Activated CD8-positive, alpha-beta T cell treated with anti-CD3 and anti-CD28 coated beads for 36 hours (primary cell): ENCODE measurements at regions of chr17 and their contacts with region 1.

Region 1: GRCh38 chr17:31524926-31525800 is 133.7 kb downstream of the RAB11FIP4 start:
- DNase-seq: peak; percentile 92
- ATAC-seq: peak; percentile 77
- H3K4me3 Mint-ChIP-seq: no peak overlapping the region
- H3K27ac Mint-ChIP-seq: no peak overlapping the region
- H3K4me1 Mint-ChIP-seq: no peaks in the 10 kb centered on the region
- H3K27me3 Mint-ChIP-seq: no peaks in the 10 kb centered on the region
- CTCF ChIP-seq: peak; percentile 93

Region 2: DNA sequence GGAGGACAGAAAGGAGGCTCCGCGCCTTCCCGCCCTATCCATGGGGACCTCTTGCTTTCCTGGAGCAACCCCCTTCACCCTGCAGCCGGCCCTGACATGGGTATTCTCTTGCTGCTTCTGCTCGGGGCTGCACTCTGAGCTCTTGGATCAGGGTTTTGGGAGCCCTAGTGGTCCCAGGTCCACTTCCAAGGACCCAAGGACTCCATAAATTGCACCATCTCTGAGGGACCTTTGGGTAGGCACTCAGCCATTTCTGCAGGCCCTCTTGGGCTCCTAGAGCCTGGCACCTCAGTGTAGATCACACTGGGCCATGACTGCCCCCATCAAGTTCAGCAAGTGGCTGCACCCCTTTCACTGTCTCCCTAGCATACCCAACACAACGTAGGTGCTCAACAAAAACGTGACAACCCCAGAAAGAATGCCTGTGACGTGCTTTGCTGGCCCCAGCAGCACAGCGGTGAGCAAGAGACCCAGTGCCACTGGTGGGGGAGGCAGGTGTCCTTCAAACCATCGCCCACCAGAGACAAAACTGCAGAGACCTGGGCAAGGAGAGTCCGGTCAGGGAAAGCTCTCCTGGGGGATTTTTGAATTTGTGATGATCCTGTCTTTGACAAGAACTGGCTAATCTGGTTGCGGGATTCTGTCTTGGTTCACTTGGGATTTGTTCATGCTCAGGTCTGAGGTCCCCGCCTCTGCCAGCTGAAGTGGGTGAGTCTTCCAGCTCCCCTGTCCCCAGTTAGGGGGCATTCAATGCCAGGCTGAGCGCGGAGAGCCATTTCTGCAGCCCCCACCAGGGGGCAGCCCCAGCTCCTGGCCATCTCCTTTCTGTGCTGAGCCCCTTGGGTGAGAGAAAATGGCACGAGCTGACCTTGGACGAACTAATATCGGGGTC is 136.1 kb before region 1 on chr17:
- CTCF ChIA-PET with region 1: interaction called, 41 read pairs
- POLR2A ChIA-PET with region 1: no interaction called
- intact Hi-C with region 1: loop called (anchors 5 kb)
- DNase-seq: peak; percentile 59
- ATAC-seq: peak; percentile 69
- H3K4me3 Mint-ChIP-seq: no peak overlapping the region
- H3K27ac Mint-ChIP-seq: no peak overlapping the region
- H3K4me1 Mint-ChIP-seq: peaks cover 5% of the 10 kb centered on the region
- H3K27me3 Mint-ChIP-seq: peaks cover 38% of the 10 kb centered on the region
- CTCF ChIP-seq: peak; percentile 87

Region 3: DNA sequence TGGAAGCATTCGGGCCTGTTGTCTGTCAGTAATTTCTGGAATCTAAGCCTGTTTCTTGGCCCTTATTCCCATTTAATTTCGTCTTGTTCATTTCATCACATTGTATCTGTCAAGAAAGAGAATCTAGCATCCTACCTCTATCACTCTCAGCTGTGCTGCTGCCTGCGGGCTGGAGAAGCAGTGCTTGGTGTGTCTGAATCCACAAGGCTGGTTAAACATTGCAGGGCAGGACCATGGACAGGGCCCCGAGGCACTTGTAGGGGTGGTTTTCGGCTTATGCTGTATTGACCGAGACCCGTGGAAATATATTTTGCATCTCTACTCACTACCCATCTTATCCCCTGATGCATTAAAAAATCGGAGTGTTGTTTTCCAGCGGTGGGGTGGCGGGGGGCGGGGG is 130.6 kb before region 1 on chr17:
- CTCF ChIA-PET with region 1: interaction called, 41 read pairs
- POLR2A ChIA-PET with region 1: no interaction called
- intact Hi-C with region 1: loop called (anchors 5 kb)
- DNase-seq: peak; percentile 74
- ATAC-seq: peak; percentile 60
- H3K4me3 Mint-ChIP-seq: no peak overlapping the region
- H3K27ac Mint-ChIP-seq: no peak overlapping the region
- H3K4me1 Mint-ChIP-seq: peaks cover 5% of the 10 kb centered on the region
- H3K27me3 Mint-ChIP-seq: peaks cover 47% of the 10 kb centered on the region
- CTCF ChIP-seq: no peak

Region 4: GRCh38 chr17:31425282-31426040 is 99.7 kb before region 1 on chr17:
- CTCF ChIA-PET with region 1: no interaction called
- POLR2A ChIA-PET with region 1: no interaction called
- intact Hi-C with region 1: no loop called
- DNase-seq: no peak
- ATAC-seq: no peak
- H3K4me3 Mint-ChIP-seq: no peak overlapping the region
- H3K27ac Mint-ChIP-seq: no peak overlapping the region
- H3K4me1 Mint-ChIP-seq: no peaks in the 10 kb centered on the region
- H3K27me3 Mint-ChIP-seq: peaks cover 6% of the 10 kb centered on the region
- CTCF ChIP-seq: no peak

Region 5: DNA sequence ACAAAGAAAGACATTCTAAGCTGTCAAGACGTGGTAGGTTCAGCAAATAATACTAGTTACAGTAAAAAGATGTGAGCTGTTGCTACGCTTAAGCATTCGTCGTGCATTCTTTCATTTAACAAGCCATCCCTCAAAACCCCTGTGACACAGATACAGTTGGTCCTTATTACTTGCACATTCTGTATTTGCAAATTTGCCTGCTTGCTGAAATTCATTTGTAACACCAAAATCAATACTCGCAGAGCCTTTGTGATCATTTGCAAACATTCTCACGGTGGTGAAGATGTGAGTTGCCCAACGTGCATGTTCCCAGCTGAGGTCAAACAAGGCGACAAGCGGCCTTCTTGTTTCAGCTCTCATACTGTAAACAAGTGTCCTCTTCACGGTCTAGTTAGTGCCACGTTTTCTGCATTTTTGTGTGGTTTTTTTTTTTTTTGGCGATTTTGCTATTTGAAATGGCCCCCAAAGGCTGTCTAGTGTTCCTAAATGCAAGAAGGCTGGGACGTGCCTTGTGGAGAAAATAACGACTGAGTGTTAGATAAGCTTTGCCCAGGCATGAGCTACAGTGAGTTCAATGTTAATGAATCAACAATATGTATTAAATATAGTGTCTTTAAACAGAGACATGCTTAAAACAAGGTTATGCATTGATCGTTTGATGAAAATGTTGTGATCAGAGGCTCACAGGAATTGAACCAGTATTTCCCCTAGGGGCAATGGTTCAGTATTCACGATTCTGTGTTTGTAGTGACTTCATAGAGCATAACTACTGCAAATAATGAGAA is 49.6 kb before region 1 on chr17:
- CTCF ChIA-PET with region 1: interaction called, 10 read pairs
- POLR2A ChIA-PET with region 1: no interaction called
- intact Hi-C with region 1: no loop called
- DNase-seq: no peak
- ATAC-seq: no peak
- H3K4me3 Mint-ChIP-seq: no peak overlapping the region
- H3K27ac Mint-ChIP-seq: no peak overlapping the region
- H3K4me1 Mint-ChIP-seq: peaks cover under 1% of the 10 kb centered on the region
- H3K27me3 Mint-ChIP-seq: no peaks in the 10 kb centered on the region
- CTCF ChIP-seq: no peak

Region 6: GRCh38 chr17:31508288-31509094 is 16.7 kb before region 1 on chr17:
- CTCF ChIA-PET with region 1: interaction called, 31 read pairs
- POLR2A ChIA-PET with region 1: interaction called, 24 read pairs
- intact Hi-C with region 1: no loop called
- DNase-seq: peak; percentile 81
- ATAC-seq: peak; percentile 82
- H3K4me3 Mint-ChIP-seq: peak overlapping the region; percentile 76
- H3K27ac Mint-ChIP-seq: peak overlapping the region; percentile 98
- H3K4me1 Mint-ChIP-seq: peaks cover 62% of the 10 kb centered on the region
- H3K27me3 Mint-ChIP-seq: no peaks in the 10 kb centered on the region
- CTCF ChIP-seq: peak; percentile 72

Region 7: DNA sequence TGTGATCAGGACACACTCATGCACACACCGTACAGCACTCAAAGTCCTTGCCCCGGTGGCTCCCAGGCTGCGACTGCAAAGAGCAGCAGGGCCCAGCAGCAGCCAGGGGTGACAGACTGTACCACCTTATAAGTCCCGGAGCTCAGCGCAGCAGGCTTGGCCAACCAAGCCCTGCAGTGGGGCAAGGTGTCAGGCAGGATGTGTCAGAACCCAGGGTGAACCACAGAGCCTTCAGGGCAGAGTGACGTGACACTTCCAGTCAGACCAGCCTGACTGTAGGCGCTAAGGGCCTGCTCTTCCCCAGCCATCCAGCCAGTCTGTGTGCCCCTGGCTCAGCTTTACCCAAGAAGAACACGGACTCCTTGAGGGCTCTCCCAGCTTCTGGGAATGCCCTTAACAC is 129.8 kb after region 1 on chr17:
- CTCF ChIA-PET with region 1: no interaction called
- POLR2A ChIA-PET with region 1: no interaction called
- intact Hi-C with region 1: no loop called
- DNase-seq: peak; percentile 51
- ATAC-seq: peak; percentile 83
- H3K4me3 Mint-ChIP-seq: no peak overlapping the region
- H3K27ac Mint-ChIP-seq: no peak overlapping the region
- H3K4me1 Mint-ChIP-seq: no peaks in the 10 kb centered on the region
- H3K27me3 Mint-ChIP-seq: peaks cover 10% of the 10 kb centered on the region
- CTCF ChIP-seq: no peak